ENCODE measurements at regions of chr3 and their contacts with region 1.

Region 1: GRCh38 chr3:190701096-190701532 is 161.4 kb downstream of the GMNC start:
- DNase-seq: no peak
- H3K4me3 ChIP-seq: no peak overlapping the region
- H3K27ac ChIP-seq: no peak overlapping the region
- H3K27me3 ChIP-seq: peaks cover 0 to 10% (median 0%) of the 10 kb centered on the region in 45 donors
- CTCF ChIP-seq: peak in 37 of 56 donors; percentile 14 to 54 (median 37)

Region 2: DNA sequence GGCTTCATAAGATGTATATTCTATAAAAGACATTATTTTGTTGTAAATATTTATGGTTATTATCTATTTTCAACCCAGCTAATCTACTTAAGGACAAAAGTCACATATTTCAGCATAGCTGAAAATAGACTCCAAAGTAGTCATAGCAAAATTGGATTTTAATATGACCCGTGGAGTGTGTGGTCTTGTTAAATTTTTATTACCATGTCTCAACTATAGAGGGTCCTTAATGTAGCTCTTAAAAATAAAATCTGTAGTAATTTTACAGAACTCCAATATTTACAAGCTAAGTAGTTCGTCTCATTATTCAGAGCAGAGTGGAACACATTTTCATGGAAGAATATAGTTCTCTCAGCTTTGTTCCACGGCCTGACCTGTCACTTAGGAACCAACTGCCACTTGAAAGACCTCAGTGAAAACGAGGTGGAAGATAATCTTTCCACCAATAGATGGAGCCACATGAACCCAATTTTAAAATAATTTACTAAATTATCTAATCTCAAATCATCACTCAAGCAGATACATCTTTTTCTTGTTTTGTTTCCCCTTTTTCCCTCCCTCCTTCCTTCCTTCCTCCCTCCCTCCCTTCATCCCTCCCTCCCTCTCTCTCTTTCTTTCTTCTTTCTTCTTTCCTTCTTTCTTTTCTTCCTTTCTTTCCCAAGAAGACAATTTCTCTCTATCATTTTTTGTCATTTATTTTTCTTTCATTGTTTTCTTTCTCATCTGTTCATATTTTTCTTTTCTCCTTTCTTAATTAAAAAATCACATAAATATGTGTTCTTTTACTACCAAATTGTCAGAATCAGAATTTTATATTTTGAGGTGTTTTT is 476.0 kb before region 1 on chr3:
- intact Hi-C with region 1: loop called in 1 of 2 experiments (anchors 10 kb)
- DNase-seq: no peak
- H3K4me3 ChIP-seq: no peak overlapping the region
- H3K27ac ChIP-seq: no peak overlapping the region
- H3K27me3 ChIP-seq: peaks cover 0 to 3% (median 0%) of the 10 kb centered on the region in 45 donors
- CTCF ChIP-seq: peak; percentile 18 to 75 (median 57)

Region 3: DNA sequence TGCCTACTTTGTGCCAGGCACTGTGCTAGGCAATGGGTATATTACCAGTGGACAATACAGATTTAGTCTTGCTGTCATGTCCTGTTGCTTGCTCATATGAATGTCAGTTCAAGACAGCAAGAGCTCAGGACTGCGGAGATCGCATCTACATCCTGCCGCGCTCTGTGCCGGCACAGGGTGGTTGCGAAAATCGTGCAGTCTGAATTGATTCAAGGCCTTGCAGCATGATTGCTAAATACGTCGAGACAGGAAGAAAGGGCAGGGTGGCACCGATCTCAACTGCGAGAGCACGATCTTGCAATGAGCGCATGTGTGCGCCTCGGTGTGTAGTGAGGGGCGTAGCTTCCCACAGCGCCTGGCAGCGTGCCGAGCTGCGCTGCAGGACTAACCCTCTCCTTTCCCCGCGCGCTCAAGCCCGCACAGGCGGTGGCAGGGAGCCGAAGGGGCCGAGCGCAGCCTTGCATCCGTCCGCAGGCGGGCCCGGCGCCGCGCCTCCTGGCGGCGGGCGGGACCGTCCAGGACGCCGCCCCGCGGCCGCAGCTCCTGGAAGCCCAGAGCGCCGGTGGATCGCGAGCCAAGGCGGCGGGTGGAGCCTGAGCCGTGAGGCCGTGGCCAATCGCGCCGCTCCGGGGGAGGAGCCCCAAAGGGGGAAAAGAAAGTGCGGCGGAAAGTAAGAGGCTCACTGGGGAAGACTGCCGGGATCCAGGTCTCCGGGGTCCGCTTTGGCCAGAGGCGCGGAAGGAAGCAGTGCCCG is 187.5 kb before region 1 on chr3 and contains the start of gene IL1RAP:
- intact Hi-C with region 1: loop called in 1 of 2 experiments (anchors 10 kb)
- DNase-seq: peak; percentile 42 to 91 (median 79)
- H3K4me3 ChIP-seq: peak within 1 kb of the TSS; percentile 56 to 93 (median 80)
- H3K27ac ChIP-seq: peak within 1 kb of the TSS in 58 of 59 donors; percentile 16 to 89 (median 75)
- H3K27me3 ChIP-seq: no peaks in the 10 kb centered on the region
- CTCF ChIP-seq: peak; percentile 31 to 93 (median 65)
- total RNA-seq, gene IL1RAP: 13.2 to 38.2 (median 22.1) TPM

Region 4: GRCh38 chr3:191051037-191051436 is 349.9 kb after region 1 on chr3:
- intact Hi-C with region 1: loop called in 1 of 2 experiments (anchors 10 kb)
- DNase-seq: no peak
- H3K4me3 ChIP-seq: no peak overlapping the region
- H3K27ac ChIP-seq: no peak overlapping the region
- H3K27me3 ChIP-seq: peaks cover 0 to 2% (median 0%) of the 10 kb centered on the region in 45 donors
- CTCF ChIP-seq: peak; percentile 44 to 81 (median 66)

Measured in dorsolateral prefrontal cortex (tissue), 120 donors.